Activated naive CD4-positive, alpha-beta T cell treated with anti-CD3 and anti-CD28 coated beads for 36 hours (primary cell): ENCODE measurements at regions of chr20 and their contacts with region 1.

Region 1: GRCh38 chr20:4108495-4109306 is 93.3 kb upstream of the RNF24 start:
- DNase-seq: peak; percentile 86
- H3K4me3 Mint-ChIP-seq: no peak overlapping the region
- H3K27ac Mint-ChIP-seq: peak overlapping the region; percentile 48
- H3K4me1 Mint-ChIP-seq: peaks cover 12% of the 10 kb centered on the region
- H3K27me3 Mint-ChIP-seq: peaks cover 5% of the 10 kb centered on the region

Region 2: DNA sequence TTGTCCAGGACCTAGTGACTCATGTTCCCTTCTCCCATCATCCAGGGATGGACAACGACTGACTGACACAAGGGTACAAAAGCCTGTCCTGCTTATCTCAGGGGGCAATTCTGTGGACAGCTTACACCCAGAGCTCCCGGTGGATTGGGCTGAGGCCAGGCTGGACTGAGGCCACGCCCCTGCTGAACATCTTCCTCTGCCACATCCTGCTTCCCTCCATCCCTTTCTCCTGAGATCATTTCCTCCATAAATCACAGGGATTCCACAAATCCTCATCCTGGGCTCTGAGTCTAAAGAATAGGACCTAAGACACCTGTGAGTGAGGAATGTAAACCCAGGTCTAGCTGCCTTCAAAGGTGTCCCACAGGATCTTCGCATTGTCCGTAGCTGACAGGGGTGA is 63.0 kb before region 1 on chr20:
- CTCF ChIA-PET with region 1: no interaction called
- intact Hi-C with region 1: no loop called
- DNase-seq: no peak
- H3K4me3 Mint-ChIP-seq: no peak overlapping the region
- H3K27ac Mint-ChIP-seq: no peak overlapping the region
- H3K4me1 Mint-ChIP-seq: no peaks in the 10 kb centered on the region
- H3K27me3 Mint-ChIP-seq: no peaks in the 10 kb centered on the region

Region 3: DNA sequence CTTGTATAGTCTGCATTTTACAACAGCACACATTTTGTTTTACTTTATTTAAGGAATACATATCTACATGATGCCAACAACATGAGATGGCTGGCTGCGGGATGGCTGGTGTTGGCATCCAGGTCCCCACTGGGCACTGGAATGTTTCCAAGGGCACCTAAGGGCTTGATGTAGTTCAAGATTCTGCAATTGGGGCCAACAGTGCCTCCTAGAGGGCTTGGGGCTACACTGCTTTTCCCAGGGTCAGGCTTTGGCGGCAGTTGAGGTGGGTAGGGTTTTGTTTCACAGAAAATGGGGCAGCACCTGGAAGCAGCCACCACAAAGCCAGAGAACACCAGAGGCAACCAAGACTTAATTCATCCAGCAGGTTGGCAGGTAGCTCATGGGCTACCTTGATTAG is 410.8 kb after region 1 on chr20:
- CTCF ChIA-PET with region 1: no interaction called
- intact Hi-C with region 1: loop called (anchors 1 kb)
- DNase-seq: peak; percentile 44
- H3K4me3 Mint-ChIP-seq: no peak overlapping the region
- H3K27ac Mint-ChIP-seq: no peak overlapping the region
- H3K4me1 Mint-ChIP-seq: no peaks in the 10 kb centered on the region
- H3K27me3 Mint-ChIP-seq: peaks cover 14% of the 10 kb centered on the region

Region 4: GRCh38 chr20:4592316-4593148 is 483.8 kb after region 1 on chr20:
- CTCF ChIA-PET with region 1: no interaction called
- intact Hi-C with region 1: loop called (anchors 1 kb)
- DNase-seq: peak; percentile 56
- H3K4me3 Mint-ChIP-seq: peak overlapping the region; percentile 54
- H3K27ac Mint-ChIP-seq: no peak overlapping the region
- H3K4me1 Mint-ChIP-seq: peaks cover 5% of the 10 kb centered on the region
- H3K27me3 Mint-ChIP-seq: peaks cover 11% of the 10 kb centered on the region